Ascending aorta (tissue), 2 donors: ENCODE measurements at regions of chr16 and their contacts with region 1.

Region 1: GRCh38 chr16:425082-425718 is at the start of gene RAB11FIP3:
- DNase-seq: peak; percentile 43 to 88
- H3K4me3 ChIP-seq: peak within 1 kb of the TSS; percentile 76 to 81
- H3K27ac ChIP-seq: peak within 1 kb of the TSS; percentile 95 to 97
- H3K4me1 ChIP-seq: peaks cover 0 to 20% of the 10 kb centered on the region in 2 donors
- H3K27me3 ChIP-seq: no peaks in the 10 kb centered on the region
- CTCF ChIP-seq: peak in 2 of 3 experiments; percentile 5 to 32
- total RNA-seq, gene RAB11FIP3: 47.0 TPM

Region 2: GRCh38 chr16:401468-402348 is 23.5 kb before region 1 on chr16 and contains the start of gene DECR2:
- intact Hi-C with region 1: loop called (anchors 1 kb)
- DNase-seq: peak; percentile 75 to 97
- H3K4me3 ChIP-seq: peak within 1 kb of the TSS; percentile 63 to 76
- H3K27ac ChIP-seq: peak within 1 kb of the TSS; percentile 88 to 93
- H3K4me1 ChIP-seq: peaks cover 4 to 10% of the 10 kb centered on the region in 2 donors
- H3K27me3 ChIP-seq: no peaks in the 10 kb centered on the region
- CTCF ChIP-seq: peak; percentile 21 to 67 (median 63)
- total RNA-seq, gene DECR2: 44.0 TPM